ENCODE measurements at regions of chr16 and their contacts with region 1.

Region 1: DNA sequence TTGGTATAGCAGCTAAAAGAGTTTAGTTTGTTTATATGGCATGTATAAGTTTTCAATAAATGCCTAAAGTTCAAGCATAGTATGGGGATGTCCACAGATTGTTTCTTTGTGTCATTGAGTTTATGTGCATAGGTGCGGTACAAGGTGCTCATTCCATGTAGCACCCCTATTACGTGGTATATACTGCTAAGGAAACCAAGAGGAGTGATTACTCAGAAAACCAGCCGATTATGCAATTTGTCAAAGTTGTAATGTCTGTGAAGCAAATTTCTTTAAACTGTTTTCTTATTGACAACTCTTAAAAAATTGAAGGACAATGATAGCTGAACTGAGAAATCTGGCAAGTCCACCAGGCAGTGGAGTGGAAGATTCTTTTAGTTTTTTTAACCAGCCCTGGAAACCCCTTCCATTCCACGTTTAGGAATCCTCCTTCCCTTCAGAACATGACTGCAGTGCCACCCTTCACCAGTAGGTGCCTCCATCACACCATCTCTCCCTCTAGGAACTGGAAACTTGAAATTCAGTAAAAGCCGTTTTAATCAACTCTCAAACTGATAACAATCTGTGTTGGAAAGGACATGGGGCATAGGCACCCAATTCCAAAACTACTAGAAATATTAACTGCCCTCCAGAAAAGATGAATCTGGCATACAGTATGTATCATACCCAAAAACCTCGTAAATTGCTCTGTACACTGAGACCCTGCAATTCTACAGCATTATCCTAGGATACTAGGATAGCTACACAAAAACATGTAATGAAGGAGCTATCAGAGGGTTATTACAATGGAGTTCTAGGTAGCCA is 43.5 kb downstream of the REXO5 start:
- DNase-seq: peak; percentile 50
- H3K4me3 ChIP-seq: peak overlapping the region in 1 of 2 experiments; percentile 40; a peak in 1 of 4 replicates
- H3K27ac ChIP-seq: peak overlapping the region in 1 of 2 experiments; percentile 7; a peak in 1 of 4 replicates
- H3K4me1 ChIP-seq: peaks cover 0 to 4% of the 10 kb centered on the region in 2 experiments; a peak in 2 of 4 replicates
- H3K27me3 ChIP-seq: no peaks in the 10 kb centered on the region
- CTCF ChIP-seq: peak; percentile 100
- EP300 ChIP-seq: no peak
- RAD21 ChIP-seq: peak; percentile 96

Region 2: GRCh38 chr16:20707461-20707860 is 142.3 kb before region 1 on chr16:
- CTCF ChIA-PET with region 1: no interaction called
- POLR2A ChIA-PET with region 1: no interaction called
- DNase-seq: no peak
- H3K4me3 ChIP-seq: no peak overlapping the region
- H3K27ac ChIP-seq: no peak overlapping the region
- H3K4me1 ChIP-seq: no peaks in the 10 kb centered on the region
- H3K27me3 ChIP-seq: no peaks in the 10 kb centered on the region
- CTCF ChIP-seq: no peak
- EP300 ChIP-seq: no peak
- RAD21 ChIP-seq: no peak

Region 3: DNA sequence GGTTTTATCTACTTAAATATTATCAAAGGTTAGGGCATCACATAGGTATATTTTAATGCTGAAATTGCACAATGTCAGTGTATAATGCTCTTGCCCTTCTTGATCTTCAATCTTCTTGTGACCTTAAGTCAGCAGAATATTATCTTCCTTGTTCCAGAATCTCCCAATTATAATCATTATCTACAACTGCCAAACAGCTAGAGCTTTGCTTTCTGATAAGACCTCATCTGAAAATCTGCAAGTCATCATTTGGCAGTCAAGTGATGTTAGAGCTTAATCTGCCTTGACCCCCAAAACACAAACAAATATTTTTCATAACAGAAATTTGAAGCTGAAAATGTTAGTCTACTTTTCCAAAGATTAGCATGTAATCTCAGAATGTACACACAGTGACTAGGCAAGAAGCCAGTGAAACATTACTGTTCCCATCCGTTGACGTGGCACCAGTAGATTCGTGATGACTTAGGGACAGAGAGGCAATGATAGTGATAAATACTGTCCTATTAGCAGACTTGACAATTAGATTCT is 23.7 kb before region 1 on chr16:
- CTCF ChIA-PET with region 1: interaction called, 21 read pairs
- POLR2A ChIA-PET with region 1: no interaction called
- DNase-seq: no peak
- H3K4me3 ChIP-seq: no peak overlapping the region
- H3K27ac ChIP-seq: peak overlapping the region in 1 of 2 experiments; percentile 16; a peak in 1 of 4 replicates
- H3K4me1 ChIP-seq: no peaks in the 10 kb centered on the region; a peak in 1 of 4 replicates
- H3K27me3 ChIP-seq: no peaks in the 10 kb centered on the region
- CTCF ChIP-seq: no peak
- EP300 ChIP-seq: no peak
- RAD21 ChIP-seq: no peak

Region 4: DNA sequence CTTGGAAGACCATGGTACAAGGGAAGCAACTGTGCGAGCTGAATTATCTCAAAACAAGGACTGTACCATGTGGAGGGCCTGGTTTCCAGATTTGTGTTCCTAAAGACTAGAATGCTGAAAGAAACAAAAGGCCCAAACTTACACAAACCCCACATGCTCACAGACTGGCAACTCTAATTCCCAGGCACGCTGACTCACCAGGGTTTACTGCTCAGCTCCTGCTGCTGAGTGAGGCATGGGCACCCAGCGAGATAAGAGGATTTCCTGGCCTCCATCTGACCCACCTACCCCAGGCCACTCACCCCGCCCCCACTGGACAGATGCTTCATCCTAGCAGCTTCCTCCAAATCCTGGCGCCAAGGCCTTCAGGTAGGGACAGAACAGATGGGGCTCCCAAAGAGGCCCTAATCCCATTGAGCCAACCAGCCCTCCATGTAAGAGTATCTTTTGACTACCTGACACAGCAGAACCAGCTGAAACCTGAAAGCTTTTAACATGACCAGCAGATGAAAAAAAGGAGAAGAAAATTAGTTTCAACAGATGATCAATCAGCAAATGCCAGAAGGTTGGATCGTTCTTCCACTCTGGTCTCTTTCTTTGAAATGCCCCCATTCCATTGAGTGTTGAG is 16.5 kb after region 1 on chr16:
- CTCF ChIA-PET with region 1: interaction called, 23 read pairs
- POLR2A ChIA-PET with region 1: no interaction called
- DNase-seq: peak; percentile 35
- H3K4me3 ChIP-seq: no peak overlapping the region
- H3K27ac ChIP-seq: peak overlapping the region; percentile 90 to 96
- H3K4me1 ChIP-seq: peaks cover 36 to 41% of the 10 kb centered on the region in 2 experiments
- H3K27me3 ChIP-seq: no peaks in the 10 kb centered on the region
- CTCF ChIP-seq: no peak
- EP300 ChIP-seq: peak in 1 of 2 experiments; percentile 50; a peak in 1 of 4 replicates
- RAD21 ChIP-seq: no peak

Region 5: DNA sequence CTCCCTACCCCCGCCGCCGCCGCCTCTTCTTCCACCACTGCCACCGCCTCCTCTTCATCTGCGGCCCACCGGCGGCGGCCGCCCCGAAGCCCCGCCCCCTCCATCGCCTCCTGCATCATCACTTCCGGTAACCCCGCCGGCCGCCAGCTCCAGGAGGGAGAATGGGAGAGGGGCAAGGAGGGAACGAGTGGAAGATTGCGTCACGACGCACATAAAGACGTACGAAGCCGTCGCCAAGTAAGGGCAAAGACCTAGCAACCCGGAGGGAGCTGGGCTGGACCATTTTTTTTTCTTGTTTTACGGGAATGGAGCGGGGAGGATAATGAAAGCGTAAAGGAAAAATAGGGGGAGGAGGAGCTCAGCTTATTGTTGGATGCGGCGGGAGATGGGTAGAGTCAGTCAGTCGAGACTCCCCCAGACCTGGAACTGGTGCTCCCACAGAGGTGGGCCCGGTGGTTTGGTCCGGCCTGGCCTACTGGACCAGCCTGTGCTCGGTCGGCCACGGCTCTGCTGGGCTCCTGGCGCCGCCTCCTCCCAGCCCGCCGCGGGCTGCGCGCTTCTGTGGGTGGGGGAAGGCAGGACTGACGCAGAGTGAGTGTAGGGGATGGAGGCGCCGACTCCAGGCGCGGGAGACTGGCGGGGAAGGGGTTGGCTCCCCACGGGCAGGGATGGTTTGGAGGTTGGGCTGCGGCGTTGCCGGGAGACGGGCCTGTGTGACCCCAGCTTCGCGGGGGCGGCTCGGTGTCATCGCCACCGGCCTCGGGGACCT is 50.7 kb after region 1 on chr16 and contains the starts of genes DCUN1D3 and LYRM1:
- CTCF ChIA-PET with region 1: interaction called, 10 read pairs
- POLR2A ChIA-PET with region 1: interaction called, 3 read pairs
- DNase-seq: peak; percentile 96
- H3K4me3 ChIP-seq: peak within 1 kb of the TSS; percentile 84 to 95
- H3K27ac ChIP-seq: peak within 1 kb of the TSS; percentile 93 to 98
- H3K4me1 ChIP-seq: peaks cover 20 to 22% of the 10 kb centered on the region in 2 experiments; a peak in 3 of 4 replicates
- H3K27me3 ChIP-seq: no peaks in the 10 kb centered on the region
- CTCF ChIP-seq: no peak
- EP300 ChIP-seq: peak in 1 of 2 experiments; percentile 29; a peak in 1 of 4 replicates
- RAD21 ChIP-seq: no peak
- polyA plus RNA-seq, gene DCUN1D3: 4.7 and 6.2 TPM in 2 replicates
- polyA plus RNA-seq, gene LYRM1: 18.1 and 21.9 TPM in 2 replicates

Region 6: GRCh38 chr16:21100447-21100846 is 250.7 kb after region 1 on chr16:
- CTCF ChIA-PET with region 1: interaction called, 23 read pairs
- POLR2A ChIA-PET with region 1: no interaction called
- DNase-seq: no peak
- H3K4me3 ChIP-seq: no peak overlapping the region
- H3K27ac ChIP-seq: no peak overlapping the region
- H3K4me1 ChIP-seq: peaks cover 3 to 11% of the 10 kb centered on the region in 2 experiments; a peak in 2 of 4 replicates
- H3K27me3 ChIP-seq: no peaks in the 10 kb centered on the region
- CTCF ChIP-seq: no peak
- EP300 ChIP-seq: no peak
- RAD21 ChIP-seq: no peak

Measured in SK-N-SH (cell line).